ENCODE measurements at regions of chr9 and their contacts with region 1.

Region 1: DNA sequence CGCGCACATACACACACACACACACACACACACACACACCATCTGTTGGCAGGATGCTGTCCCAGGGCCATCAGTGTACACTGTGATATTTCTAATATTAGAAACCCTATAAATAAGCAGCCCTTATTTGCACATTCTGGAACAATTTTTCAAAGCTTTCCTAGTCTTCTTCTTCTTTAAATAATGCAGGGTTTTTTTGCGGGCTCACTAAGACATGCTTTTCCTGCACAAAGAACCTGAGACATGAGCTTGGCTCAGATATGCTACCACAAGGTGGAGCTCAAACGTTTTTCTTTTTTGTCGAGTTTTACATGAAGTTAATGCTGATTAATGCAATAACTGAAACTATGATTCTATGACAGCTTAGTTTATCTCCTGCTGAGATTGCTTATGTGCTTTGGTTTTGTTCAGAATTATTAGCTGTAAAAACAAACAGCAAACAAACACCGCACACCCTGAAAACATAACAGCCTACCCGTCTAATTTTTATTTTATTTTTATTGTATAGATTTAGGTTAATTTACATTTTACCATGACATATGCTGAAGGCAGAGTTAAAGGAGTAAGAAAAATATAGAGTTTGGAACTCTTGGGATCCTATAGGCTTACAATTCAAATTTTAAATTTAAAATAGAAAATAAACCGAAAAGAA is 95.8 kb downstream of the ALDH1A1 start:
- DNase-seq: peak; percentile 55
- H3K4me3 ChIP-seq: no peak overlapping the region
- CTCF ChIP-seq: peak; percentile 71

Region 2: DNA sequence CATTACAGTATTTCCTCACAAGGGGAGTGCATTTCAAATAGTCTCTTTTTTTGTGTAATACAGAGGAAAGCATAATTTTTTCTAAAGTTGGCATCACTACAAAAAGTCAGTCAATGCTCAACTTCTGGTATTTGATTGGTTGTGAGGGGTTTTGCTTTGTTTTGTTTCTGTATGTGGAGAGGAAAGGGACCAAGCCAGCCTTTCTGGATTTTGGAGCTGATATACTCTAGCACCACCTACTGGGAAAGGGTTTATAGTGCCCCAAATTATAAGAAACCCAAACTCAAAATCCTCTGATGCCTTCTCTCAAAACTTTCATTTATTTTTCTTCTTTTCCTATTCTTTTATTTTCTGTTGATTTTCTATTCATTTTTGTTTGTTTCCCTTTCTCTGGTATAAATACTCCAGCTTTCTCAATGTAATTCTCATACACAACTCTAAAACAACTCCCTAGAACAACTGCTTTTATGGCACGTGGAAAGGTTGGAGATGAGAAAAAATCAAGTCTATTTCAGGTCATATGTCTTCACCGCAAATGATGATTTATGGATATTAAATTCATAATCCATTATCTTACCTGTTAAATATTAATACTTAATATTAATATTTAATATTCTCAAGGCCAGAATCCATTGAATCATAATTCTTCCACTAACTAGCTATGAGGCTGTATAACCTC is 225.0 kb after region 1 on chr9:
- in situ Hi-C with region 1: loop called (anchors 25 kb)
- DNase-seq: peak; percentile 54
- H3K4me3 ChIP-seq: no peak overlapping the region
- CTCF ChIP-seq: peak; percentile 83

Region 3: DNA sequence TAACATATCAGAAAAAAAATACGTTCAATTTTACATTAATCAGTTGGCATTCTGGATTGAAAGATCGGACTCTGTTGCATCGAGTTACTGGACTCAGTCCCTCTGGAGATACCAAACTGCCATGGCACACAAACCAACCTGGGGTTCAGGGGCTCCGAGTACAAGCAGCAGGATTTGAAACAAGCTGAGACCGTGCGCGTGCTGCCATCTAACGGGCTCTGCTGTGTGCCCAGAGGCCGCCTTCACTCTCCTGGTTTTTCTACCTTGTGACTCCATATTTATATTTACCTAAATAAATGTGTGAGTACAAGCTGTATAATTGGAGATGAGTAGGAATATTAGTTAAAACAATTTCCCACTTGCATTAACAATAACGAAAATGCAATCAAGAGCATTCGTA is 342.8 kb after region 1 on chr9:
- in situ Hi-C with region 1: loop called (anchors 5 kb)
- DNase-seq: no peak
- H3K4me3 ChIP-seq: no peak overlapping the region
- CTCF ChIP-seq: peak; percentile 32